Panc1 (cell line): ENCODE measurements at regions of chr1 and their contacts with region 1.

Region 1: GRCh38 chr1:240258910-240259309 is 167.2 kb downstream of the FMN2 start:
- DNase-seq: no peak
- ATAC-seq: no peak
- H3K4me3 ChIP-seq: no peak overlapping the region
- H3K27ac ChIP-seq: no peak overlapping the region
- H3K4me1 ChIP-seq: no peaks in the 10 kb centered on the region
- H3K27me3 ChIP-seq: no peaks in the 10 kb centered on the region
- CTCF ChIP-seq: no peak

Region 2: DNA sequence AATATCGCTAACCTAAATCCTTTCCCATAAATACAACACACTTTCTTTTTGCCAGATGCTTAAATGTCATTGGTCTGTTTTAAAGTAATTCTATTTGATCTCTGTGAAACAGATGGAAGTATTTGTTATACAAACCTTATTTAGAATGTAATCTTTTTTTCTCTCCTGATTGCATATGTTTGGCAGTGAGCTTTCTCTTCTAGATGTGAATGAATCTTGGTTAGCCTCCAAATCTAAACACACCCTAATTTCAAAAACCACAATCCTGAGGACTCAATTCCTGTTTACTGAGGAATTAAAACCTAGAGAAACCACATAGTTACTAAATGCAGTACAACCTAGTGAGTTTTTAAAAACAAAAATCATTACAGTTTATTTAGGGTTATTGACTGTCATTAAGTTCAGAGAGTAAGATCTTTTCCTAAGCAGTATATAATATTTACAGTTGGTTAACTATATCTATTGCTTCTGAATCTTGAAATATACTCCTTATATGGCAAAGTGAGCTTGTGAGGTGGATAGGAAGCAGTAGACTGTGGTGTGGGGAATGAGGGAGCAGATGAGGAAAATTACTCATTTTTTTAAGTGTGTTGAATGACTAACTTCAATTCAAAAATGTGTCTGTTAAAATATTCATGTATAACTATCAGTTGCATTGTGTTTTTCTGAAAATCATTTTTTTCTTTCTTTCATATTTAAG is 51.5 kb after region 1 on chr1:
- CTCF ChIA-PET with region 1: interaction called, 11 read pairs
- POLR2A ChIA-PET with region 1: no interaction called
- in situ Hi-C with region 1: no loop called
- intact Hi-C with region 1: no loop called
- DNase-seq: no peak
- ATAC-seq: no peak
- H3K4me3 ChIP-seq: no peak overlapping the region
- H3K27ac ChIP-seq: no peak overlapping the region
- H3K4me1 ChIP-seq: no peaks in the 10 kb centered on the region
- H3K27me3 ChIP-seq: no peaks in the 10 kb centered on the region
- CTCF ChIP-seq: no peak